Left ventricle myocardium inferior (tissue), 1 donor: ENCODE measurements at regions of chr3 and their contacts with region 1.

Region 1: DNA sequence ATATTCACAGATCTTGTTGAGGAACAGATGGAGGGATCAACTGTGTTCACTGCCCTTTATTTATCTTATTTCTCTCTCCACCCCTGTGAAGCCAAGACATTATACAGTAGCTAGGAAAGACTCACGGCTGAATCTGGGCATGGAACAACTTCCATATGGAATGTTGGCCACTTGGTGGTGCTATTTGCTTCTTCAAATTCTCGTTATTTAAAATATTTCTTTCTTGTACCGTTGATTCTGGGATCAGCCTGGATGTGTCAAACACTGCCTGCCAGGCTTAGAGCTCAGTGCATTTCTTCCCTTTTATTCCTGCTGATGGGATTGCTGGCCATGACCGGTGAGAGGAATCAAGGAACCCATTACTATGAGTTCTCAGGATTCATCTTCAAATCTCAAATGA is 17.5 kb upstream of the GASK1A start:
- DNase-seq: no peak
- H3K4me3 ChIP-seq: no peak overlapping the region
- H3K27ac ChIP-seq: no peak overlapping the region
- H3K4me1 ChIP-seq: no peaks in the 10 kb centered on the region
- H3K27me3 ChIP-seq: peaks cover 4% of the 10 kb centered on the region
- CTCF ChIP-seq: peak; percentile 76

Region 2: GRCh38 chr3:43155464-43156121 is 194.0 kb after region 1 on chr3:
- intact Hi-C with region 1: loop called (anchors 5 kb)
- DNase-seq: peak; percentile 60
- H3K4me3 ChIP-seq: no peak overlapping the region
- H3K27ac ChIP-seq: no peak overlapping the region
- H3K4me1 ChIP-seq: peaks cover 20% of the 10 kb centered on the region
- H3K27me3 ChIP-seq: peaks cover 10% of the 10 kb centered on the region
- CTCF ChIP-seq: peak; percentile 73